A549 (cell line): ENCODE measurements at regions of chr1 and their contacts with region 1.

Region 1: DNA sequence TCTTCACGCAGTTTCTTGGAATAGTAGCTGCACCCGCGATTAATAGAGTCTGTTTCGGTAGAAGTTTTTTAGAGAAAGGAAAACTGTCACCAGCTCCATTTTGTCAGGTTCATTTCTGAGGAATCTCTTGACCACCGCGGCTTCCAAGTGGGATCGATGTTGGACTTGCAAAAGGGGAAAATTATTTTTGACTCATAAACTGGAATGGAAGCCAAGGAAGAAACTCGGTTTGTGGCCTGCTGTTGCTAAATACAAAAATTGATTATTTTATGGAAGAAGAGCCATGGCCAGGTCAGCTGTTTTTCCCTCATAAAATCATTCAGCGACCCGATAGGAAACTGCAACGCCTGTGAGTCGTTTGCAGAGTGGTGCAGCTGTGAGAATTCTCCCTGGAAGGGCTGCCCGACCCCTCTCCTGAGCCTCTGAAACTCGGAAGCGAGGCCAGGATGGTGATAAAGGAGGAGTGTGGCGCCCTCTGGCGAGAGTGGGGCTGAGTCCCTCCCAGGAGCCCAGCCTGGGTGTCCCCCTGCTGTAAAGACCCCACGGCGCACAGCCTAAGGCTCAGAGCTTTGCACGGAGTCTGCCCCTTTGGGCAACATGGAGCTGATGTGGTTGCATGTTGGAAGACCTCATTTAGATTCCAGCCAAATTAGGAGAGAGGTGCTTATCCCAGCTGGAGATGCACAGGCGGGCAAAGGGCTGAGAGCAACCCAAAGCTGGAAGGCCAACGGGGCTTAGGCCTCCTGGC is 83.6 kb upstream of the SLC25A33 start:
- DNase-seq: peak; percentile 35 to 44
- ATAC-seq: peak; percentile 76 to 94; a peak in 5 of 6 replicates
- H3K4me3 ChIP-seq: no peak overlapping the region
- H3K27ac ChIP-seq: peak overlapping the region; percentile 22 to 31; a peak in 1 of 6 replicates
- H3K4me1 ChIP-seq: no peaks in the 10 kb centered on the region
- CTCF ChIP-seq: peak; percentile 59
- EP300 ChIP-seq: no peak
- POLR2A ChIP-seq: no peak
- RAD21 ChIP-seq: peak; percentile 82 to 83

Region 2: DNA sequence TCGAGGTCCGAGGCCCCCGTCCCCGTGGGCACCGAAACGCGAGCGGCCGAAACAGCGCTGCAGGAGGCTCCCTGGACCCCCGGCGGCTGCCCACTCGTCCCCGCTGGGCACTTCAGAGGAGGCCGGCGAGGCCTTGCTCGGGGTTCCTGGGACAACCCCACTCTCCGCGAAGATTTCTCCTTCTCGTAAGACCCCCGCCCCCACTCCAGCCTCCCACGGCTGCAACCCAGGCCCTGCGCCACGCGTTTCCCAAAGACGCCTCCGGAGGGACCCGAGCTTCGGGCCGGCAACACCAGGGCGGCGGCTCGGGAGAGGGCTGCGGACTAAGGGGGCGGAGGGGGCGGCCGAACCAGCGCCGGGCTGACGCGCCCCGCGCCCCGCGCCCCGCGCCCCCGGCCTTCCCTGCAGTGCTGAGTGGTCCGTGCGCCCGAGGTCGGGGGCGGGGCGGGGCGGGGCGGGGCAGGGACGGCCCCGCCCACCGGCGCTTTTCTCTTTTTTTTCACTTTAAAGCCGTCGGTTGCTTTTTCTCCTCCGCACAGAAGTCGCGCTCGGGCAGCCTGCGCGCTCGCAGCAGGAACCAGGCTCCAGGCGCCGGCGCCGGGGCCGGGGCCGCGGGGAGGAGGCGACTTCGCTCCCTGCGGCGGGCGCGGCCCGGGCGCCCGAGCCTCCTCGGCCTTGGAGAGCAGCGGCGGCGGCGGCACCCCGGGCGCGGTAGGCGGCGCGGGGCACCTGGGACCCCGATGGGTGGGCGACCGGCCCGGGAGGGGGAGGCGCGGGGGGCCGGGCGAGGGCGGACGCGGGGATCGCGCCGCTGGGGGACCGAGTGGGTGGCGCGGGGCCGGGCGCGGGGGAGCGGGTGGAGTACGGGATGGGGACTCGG is 163.1 kb before region 1 on chr1 and contains the start of gene SPSB1:
- CTCF ChIA-PET with region 1: interaction called, 16 read pairs
- POLR2A ChIA-PET with region 1: no interaction called
- DNase-seq: peak in 1 of 2 experiments; percentile 64
- ATAC-seq: peak; percentile 47 to 54
- H3K4me3 ChIP-seq: peak within 1 kb of the TSS; percentile 96
- H3K27ac ChIP-seq: peak within 1 kb of the TSS; percentile 93 to 99
- H3K4me1 ChIP-seq: peaks cover 57% of the 10 kb centered on the region
- CTCF ChIP-seq: no peak
- EP300 ChIP-seq: no peak
- POLR2A ChIP-seq: peak; percentile 67
- RAD21 ChIP-seq: no peak; a peak in 1 of 5 replicates
- polyA plus RNA-seq, gene SPSB1: 19.4 and 23.7 TPM in 2 replicates

Region 3: DNA sequence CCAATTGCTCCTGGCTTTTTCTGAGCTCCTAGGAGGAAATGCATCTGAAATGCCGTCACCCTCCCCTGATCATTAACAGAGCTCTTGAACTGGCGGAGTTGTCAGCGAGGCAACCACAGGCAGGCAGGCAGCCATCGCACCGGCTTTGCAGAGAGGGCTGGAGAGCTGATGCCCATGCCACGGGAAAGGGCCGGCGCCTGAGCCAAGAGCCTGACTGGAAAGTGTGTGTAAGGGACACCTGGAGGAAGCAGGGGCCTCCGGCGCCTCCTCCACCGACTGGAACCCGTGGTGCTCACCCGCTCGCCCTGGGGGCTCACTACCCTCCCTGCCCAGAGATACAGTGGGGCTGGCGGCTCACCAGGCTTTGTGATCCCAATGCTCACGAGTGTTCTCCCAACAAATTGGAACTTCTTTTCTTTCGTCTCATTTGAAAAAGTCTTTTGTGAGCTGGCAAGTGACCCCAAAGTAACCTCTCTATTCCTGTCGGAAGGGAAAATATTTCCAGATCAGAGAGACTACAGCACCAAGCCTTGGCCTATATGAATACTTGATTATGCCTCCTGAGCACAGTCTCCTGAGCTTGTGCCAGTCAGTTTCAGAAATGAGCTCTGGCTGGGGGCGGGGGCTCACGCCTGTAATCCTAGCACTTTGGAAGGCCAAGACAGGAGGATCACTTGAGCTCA is 14.1 kb before region 1 on chr1:
- CTCF ChIA-PET with region 1: interaction called, 11 read pairs
- POLR2A ChIA-PET with region 1: no interaction called
- DNase-seq: no peak
- ATAC-seq: no peak
- H3K4me3 ChIP-seq: no peak overlapping the region
- H3K27ac ChIP-seq: peak overlapping the region; percentile 86; a peak in 3 of 6 replicates
- H3K4me1 ChIP-seq: peaks cover 44% of the 10 kb centered on the region
- CTCF ChIP-seq: no peak
- EP300 ChIP-seq: no peak
- POLR2A ChIP-seq: no peak
- RAD21 ChIP-seq: no peak

Region 4: GRCh38 chr1:9615316-9616063 is 159.8 kb after region 1 on chr1:
- CTCF ChIA-PET with region 1: no interaction called
- POLR2A ChIA-PET with region 1: no interaction called
- DNase-seq: peak; percentile 47 to 65
- ATAC-seq: peak; percentile 91 to 93
- H3K4me3 ChIP-seq: no peak overlapping the region
- H3K27ac ChIP-seq: no peak overlapping the region
- H3K4me1 ChIP-seq: no peaks in the 10 kb centered on the region
- CTCF ChIP-seq: peak; percentile 53
- EP300 ChIP-seq: no peak
- POLR2A ChIP-seq: no peak
- RAD21 ChIP-seq: peak; percentile 34 to 53; a peak in 4 of 5 replicates

Region 5: DNA sequence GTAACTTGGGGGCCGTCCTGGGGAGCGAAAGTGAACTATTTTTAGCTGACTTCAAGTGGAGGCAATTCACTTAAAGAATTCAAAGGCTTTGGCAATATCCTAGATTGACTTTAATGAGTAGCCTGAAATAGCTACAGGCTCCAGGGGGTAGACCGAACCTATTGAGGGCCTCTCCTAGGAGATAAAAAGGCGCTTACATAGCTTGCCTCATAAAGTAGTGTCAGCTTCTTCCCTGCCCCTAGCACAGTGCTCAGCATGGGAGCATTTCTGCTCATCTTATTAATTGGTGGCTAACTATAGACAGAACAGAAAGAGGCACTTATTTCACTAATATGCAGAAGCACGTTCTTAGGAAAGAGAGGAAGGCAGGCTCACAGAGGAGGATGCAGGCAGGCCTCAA is 466.7 kb after region 1 on chr1:
- CTCF ChIA-PET with region 1: no interaction called
- POLR2A ChIA-PET with region 1: no interaction called
- DNase-seq: no peak
- ATAC-seq: no peak
- H3K4me3 ChIP-seq: no peak overlapping the region
- H3K27ac ChIP-seq: no peak overlapping the region
- H3K4me1 ChIP-seq: no peaks in the 10 kb centered on the region
- CTCF ChIP-seq: no peak
- EP300 ChIP-seq: no peak
- POLR2A ChIP-seq: no peak
- RAD21 ChIP-seq: no peak